ENCODE measurements at regions of chr11 and their contacts with region 1.

Region 1: GRCh38 chr11:10405855-10406592 is 49.0 kb upstream of the AMPD3 start:
- DNase-seq: peak; percentile 48 to 92
- H3K4me3 ChIP-seq: no peak overlapping the region
- H3K27ac ChIP-seq: no peak overlapping the region
- H3K4me1 ChIP-seq: peaks cover 0 to 24% (median 11%) of the 10 kb centered on the region in 4 donors
- H3K27me3 ChIP-seq: no peaks in the 10 kb centered on the region
- CTCF ChIP-seq: peak in 5 of 7 experiments; percentile 48 to 68 (median 54)
- EP300 ChIP-seq: no peak
- POLR2A ChIP-seq: no peak

Region 2: DNA sequence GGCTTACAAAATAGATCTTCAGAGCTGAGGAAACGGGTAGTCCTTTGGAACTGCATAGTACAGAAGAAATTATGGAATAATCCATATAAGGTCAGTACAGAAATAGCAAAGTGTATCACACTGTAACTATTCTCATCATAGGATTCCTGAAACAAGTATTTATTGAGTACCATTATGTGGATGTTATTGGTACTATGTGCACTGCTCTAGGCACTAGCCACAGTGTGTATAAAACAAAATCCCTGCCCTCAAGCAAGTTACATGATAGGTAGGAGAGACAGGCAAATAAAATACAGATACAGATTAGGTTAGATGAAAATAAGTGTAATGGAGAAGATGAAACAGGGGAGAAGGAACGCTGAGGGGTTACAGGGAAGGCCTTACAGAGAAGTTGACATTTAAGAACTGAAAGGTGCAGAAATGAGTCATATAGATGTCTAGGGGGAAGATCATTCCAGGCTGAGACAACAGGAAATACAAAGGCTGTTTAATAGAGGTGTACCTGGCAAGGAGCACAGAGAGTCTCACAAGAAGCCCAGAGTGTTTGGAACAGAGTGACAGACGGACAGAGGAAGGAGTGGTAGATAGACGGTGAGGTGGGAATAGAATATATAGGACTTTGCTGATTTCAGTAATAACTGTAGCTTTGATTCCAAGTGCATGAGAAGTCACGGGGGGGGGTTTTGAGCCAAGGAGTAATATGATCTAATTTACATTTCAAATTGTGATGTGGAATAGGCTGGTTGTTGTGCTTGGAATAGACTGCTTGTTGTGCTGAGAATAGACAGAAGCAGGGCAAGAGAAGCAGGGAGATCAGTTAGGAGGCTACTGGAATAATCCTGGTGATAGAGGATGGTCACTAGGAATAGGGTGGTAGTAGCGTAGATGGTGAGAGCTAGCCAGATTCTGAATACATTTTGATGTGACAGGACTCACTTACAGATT is 121.2 kb after region 1 on chr11:
- intact Hi-C with region 1: no loop called
- DNase-seq: no peak
- H3K4me3 ChIP-seq: no peak overlapping the region
- H3K27ac ChIP-seq: peak overlapping the region in 3 of 5 donors; percentile 22 to 67 (median 58)
- H3K4me1 ChIP-seq: peaks cover 0 to 38% (median 9%) of the 10 kb centered on the region in 4 donors
- H3K27me3 ChIP-seq: no peaks in the 10 kb centered on the region
- CTCF ChIP-seq: no peak
- EP300 ChIP-seq: no peak
- POLR2A ChIP-seq: no peak

Region 3: GRCh38 chr11:10653926-10654810 is 248.1 kb after region 1 on chr11:
- intact Hi-C with region 1: loop called (anchors 5 kb)
- DNase-seq: peak in 1 of 2 donors; percentile 83
- H3K4me3 ChIP-seq: no peak overlapping the region
- H3K27ac ChIP-seq: peak overlapping the region; percentile 17 to 86 (median 81)
- H3K4me1 ChIP-seq: peaks cover 38 to 97% (median 73%) of the 10 kb centered on the region in 4 donors
- H3K27me3 ChIP-seq: no peaks in the 10 kb centered on the region
- CTCF ChIP-seq: peak in 5 of 7 experiments; percentile 30 to 61 (median 49)
- EP300 ChIP-seq: no peak
- POLR2A ChIP-seq: no peak

Measured in stomach (tissue), 19 donors.